AG04449 (cell line): ENCODE measurements at regions of chr14 and their contacts with region 1.

Region 1: DNA sequence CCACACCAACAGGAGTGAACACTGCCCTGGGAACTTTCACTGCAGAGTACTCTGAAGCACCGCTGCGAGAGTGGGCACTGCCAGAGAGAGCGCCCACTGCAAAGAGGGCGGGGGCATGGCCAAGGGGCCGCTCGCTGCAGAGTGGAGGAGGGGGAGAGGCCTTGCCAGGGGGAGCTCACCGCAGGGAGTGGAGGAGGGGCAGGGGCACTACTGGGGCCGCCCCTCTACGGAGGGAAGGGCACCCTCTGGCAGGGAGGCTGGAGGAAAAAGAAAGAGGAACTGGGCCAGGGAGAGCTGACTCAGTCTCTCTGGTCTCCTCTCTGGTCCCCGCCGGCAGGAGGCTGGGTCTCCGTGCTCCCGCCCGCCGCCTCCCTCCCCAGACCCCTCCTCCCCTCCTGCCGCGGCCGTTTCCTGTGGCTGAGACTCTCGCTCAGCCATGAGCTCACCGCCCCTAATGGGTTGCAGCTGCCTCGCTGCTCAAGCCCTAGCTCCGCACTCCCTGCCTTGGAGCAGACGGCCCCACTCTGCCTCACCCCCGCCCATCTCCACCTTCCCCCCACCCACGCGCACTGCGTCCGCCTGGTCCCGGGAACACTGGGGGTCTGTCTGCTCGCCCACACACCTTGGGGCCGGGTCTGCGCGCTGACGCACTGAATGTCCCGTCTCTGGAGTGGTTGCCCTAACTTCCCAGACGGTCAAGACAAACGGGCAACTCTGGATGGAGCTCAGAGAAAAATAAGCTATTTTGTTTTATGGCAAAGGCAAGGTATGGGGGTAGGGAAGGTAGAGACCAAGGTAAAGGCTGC is 1.3 kb downstream of the ARHGEF40 start:
- DNase-seq: no peak
- H3K4me3 ChIP-seq: peak overlapping the region; percentile 81
- CTCF ChIP-seq: no peak

Region 2: GRCh38 chr14:21039585-21040369 is 31.7 kb before region 1 on chr14:
- CTCF ChIA-PET with region 1: interaction called, 24 read pairs
- POLR2A ChIA-PET with region 1: no interaction called
- DNase-seq: peak; percentile 29
- H3K4me3 ChIP-seq: no peak overlapping the region
- CTCF ChIP-seq: peak; percentile 56

Region 3: DNA sequence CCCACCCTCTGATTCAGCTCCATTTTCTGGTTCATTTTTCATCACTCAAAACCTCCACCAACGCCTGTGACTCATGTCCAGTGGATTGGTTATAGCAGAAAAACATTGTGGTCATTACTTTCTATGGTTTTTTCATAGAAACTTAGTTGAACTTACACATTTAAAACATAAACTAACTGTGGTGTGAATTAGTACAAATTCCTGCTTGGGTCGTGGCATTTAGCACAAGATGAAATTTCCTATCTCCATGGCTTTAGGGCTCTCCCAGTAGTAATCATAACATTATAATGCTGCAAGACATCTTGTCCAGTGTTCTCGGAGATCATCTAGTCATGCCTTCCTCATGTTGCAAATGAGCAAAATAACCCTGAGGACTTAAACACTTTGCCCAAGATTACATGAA is 22.2 kb before region 1 on chr14:
- CTCF ChIA-PET with region 1: interaction called, 19 read pairs
- POLR2A ChIA-PET with region 1: interaction called, 9 read pairs
- DNase-seq: no peak
- H3K4me3 ChIP-seq: no peak overlapping the region
- CTCF ChIP-seq: no peak

Region 4: DNA sequence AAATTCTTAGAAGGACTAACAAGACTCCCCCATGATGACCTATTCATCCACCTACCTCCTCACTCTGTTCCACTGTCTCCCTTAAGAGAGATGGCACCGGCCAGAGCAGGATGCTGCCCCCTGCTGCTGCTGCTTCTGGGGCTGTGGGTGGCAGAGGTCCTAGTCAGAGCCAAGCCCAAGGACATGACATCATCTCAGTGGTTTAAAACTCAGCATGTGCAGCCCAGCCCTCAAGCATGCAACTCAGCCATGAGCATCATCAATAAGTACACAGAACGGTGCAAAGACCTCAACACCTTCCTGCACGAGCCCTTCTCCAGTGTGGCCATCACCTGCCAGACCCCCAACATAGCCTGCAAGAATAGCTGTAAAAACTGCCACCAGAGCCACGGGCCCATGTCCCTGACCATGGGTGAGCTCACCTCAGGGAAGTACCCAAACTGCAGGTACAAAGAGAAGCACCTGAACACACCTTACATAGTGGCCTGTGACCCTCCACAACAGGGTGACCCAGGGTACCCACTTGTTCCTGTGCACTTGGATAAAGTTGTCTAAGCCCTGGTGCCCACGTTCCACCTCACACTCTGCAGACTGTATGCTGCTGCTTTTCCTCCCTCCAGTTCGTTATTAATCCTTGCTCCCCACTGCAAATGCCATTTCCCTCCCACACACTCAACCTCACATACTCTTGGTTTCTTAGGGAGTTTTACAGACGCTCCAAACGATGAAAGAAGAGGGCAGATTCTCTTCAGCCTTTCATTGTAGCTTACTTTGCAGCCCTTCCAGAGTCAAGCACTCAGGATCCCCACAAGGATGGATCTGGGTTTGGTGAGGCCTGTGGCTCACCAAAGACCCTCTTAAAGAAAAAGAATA is 13.4 kb before region 1 on chr14 and contains the start of gene RNASE8:
- CTCF ChIA-PET with region 1: interaction called, 28 read pairs
- POLR2A ChIA-PET with region 1: interaction called, 8 read pairs
- DNase-seq: no peak
- H3K4me3 ChIP-seq: no peak within 1 kb of the TSS
- CTCF ChIP-seq: peak; percentile 36

Region 5: GRCh38 chr14:21084988-21085853 is 13.8 kb after region 1 on chr14:
- CTCF ChIA-PET with region 1: interaction called, 163 read pairs
- POLR2A ChIA-PET with region 1: interaction called, 42 read pairs
- DNase-seq: peak; percentile 72
- H3K4me3 ChIP-seq: no peak overlapping the region
- CTCF ChIP-seq: no peak

Region 6: GRCh38 chr14:21098076-21098891 is 26.9 kb after region 1 on chr14 and contains the start of gene ZNF219:
- CTCF ChIA-PET with region 1: interaction called, 300 read pairs
- POLR2A ChIA-PET with region 1: interaction called, 25 read pairs
- DNase-seq: no peak
- H3K4me3 ChIP-seq: peak within 1 kb of the TSS; percentile 69
- CTCF ChIP-seq: no peak